SK-N-SH (cell line): ENCODE measurements at regions of chr4 and their contacts with region 1.

Region 1: DNA sequence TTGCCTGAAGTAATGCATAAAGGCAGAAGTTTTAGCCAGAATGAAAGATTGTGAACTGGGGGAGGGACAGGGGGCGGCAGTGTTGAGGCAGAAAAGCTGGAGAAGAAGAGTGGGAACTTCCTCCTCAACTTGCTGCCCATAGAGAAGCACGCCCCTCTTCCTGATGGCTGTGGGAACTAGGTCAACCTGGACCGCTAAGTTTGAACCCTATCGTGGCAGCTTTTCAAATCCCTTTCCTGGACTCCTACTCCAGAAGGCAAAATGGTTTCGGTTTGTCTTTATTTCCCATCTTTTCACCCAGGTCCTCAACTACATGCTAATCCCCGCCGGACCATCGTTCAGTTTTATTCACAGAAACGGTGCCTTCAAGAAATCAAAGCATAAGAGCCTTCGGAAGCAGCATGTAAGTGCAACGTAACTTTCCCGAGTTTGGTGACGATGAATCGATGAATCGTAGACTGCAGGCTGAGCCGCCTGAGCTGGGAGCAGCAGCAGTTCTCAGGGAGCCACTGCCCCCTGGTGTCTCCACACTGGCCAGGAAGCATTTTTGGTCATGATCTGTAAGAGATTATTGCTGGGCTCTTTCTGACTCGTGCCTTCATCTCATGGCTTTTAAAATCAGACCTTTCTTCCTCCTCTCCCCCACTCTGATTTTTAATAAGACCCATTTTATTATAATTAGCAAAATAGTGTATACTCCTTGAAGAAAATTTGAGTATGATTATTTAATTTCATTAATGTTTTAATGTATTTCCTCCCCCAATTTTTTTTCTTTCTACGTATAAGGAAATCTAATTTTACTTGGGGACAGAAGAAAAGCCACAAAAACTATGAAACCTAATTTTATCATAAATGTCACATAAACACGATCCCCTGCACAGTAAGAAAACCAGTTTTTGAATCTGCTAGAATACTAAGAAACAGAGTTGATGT is 21.4 kb downstream of the SPINK2 start:
- DNase-seq: peak; percentile 82
- H3K4me3 ChIP-seq: peak overlapping the region; percentile 67 to 75
- H3K27ac ChIP-seq: no peak overlapping the region; a peak in 2 of 4 replicates
- H3K4me1 ChIP-seq: no peaks in the 10 kb centered on the region; a peak in 1 of 4 replicates
- H3K27me3 ChIP-seq: no peaks in the 10 kb centered on the region
- CTCF ChIP-seq: peak; percentile 92
- EP300 ChIP-seq: no peak
- RAD21 ChIP-seq: peak; percentile 97

Region 2: DNA sequence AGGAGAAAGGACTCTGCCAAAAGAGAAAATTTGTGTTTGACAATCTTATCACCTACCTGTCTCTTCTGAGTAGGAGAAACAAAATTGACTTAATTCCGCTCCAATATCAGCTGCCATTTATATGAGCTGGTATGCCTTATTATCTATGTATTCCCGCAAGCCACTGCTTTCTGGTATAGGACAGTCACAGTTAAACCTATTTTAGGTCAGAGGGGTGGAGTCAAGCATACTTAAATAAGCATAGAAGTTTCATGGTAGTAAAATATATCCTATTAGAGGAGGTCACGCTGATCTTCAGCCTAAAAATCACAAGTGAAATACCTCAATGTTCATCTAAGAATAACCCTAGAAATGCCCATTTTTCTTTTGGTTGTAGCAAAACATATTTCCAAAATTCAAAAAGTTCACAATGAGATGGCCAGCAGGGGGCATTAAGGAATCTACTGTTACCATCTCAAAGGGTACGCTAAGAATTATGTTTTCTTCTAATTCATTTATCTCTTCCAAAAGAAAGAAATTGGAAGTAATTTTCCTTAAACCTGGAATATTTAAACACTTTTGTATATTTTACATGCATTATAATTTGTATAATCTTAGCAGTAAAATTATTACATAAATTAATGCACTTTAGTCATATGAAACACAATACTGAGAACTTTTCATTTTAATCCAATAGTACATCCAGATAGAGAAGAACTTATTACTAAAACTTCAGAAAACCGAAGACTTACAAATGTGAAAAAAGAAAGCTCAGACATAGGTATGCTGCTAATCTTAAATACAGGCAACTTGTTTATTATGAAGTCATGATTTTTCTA is 375.2 kb before region 1 on chr4:
- CTCF ChIA-PET with region 1: interaction called, 13 read pairs
- POLR2A ChIA-PET with region 1: no interaction called
- DNase-seq: peak; percentile 39
- H3K4me3 ChIP-seq: no peak overlapping the region; a peak in 1 of 4 replicates
- H3K27ac ChIP-seq: no peak overlapping the region; a peak in 1 of 4 replicates
- H3K4me1 ChIP-seq: no peaks in the 10 kb centered on the region; a peak in 1 of 4 replicates
- H3K27me3 ChIP-seq: no peaks in the 10 kb centered on the region
- CTCF ChIP-seq: peak; percentile 82
- EP300 ChIP-seq: no peak
- RAD21 ChIP-seq: peak; percentile 64

Region 3: DNA sequence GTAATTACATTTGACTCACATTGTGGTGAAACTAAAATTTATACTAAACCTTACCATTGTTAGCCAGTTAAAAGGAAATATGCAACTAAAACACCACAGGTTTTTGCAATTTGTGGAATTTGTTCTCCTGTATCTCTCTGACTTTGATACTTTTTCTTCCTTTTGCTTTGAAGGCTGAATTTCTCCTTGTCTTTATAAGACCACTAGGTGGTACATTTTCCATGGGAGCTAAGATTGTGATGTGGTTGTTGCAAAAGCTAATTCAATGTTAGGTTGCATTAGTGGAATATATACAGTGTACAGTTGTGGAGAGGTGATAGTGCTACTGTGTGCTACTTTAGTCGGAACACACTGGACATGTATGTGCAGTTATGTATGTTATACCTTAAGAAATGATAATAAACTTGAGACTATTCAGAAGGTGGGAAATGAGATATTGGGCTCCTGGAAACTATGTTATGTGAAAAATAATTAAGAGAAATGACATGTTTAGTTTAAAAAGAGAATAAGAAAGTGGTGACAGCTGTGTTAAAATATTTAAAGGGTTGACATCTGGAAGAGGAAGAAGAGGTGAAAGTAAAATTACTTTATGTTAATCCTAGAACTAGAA is 224.2 kb before region 1 on chr4:
- CTCF ChIA-PET with region 1: interaction called, 37 read pairs
- POLR2A ChIA-PET with region 1: interaction called, 3 read pairs
- DNase-seq: peak; percentile 45
- H3K4me3 ChIP-seq: no peak overlapping the region
- H3K27ac ChIP-seq: no peak overlapping the region
- H3K4me1 ChIP-seq: no peaks in the 10 kb centered on the region
- H3K27me3 ChIP-seq: no peaks in the 10 kb centered on the region
- CTCF ChIP-seq: peak; percentile 69
- EP300 ChIP-seq: no peak
- RAD21 ChIP-seq: peak; percentile 69

Region 4: GRCh38 chr4:56668298-56668697 is 131.8 kb before region 1 on chr4:
- CTCF ChIA-PET with region 1: interaction called, 11 read pairs
- POLR2A ChIA-PET with region 1: no interaction called
- DNase-seq: no peak
- H3K4me3 ChIP-seq: no peak overlapping the region; a peak in 1 of 4 replicates
- H3K27ac ChIP-seq: no peak overlapping the region
- H3K4me1 ChIP-seq: no peaks in the 10 kb centered on the region
- H3K27me3 ChIP-seq: 0 out of 2 replicates have a peak, but pooled peaks cover 8% of the 10 kb centered on the region
- CTCF ChIP-seq: peak; percentile 30
- EP300 ChIP-seq: no peak
- RAD21 ChIP-seq: peak; percentile 20; the same call in 1 of the 2 replicates

Region 5: GRCh38 chr4:56843421-56843899 is 43.4 kb after region 1 on chr4:
- CTCF ChIA-PET with region 1: interaction called, 15 read pairs
- POLR2A ChIA-PET with region 1: no interaction called
- DNase-seq: no peak
- H3K4me3 ChIP-seq: no peak overlapping the region
- H3K27ac ChIP-seq: no peak overlapping the region
- H3K4me1 ChIP-seq: no peaks in the 10 kb centered on the region
- H3K27me3 ChIP-seq: no peaks in the 10 kb centered on the region
- CTCF ChIP-seq: no peak
- EP300 ChIP-seq: no peak
- RAD21 ChIP-seq: no peak